MCF 10A (cell line): ENCODE measurements at regions of chr2 and their contacts with region 1.

Region 1: DNA sequence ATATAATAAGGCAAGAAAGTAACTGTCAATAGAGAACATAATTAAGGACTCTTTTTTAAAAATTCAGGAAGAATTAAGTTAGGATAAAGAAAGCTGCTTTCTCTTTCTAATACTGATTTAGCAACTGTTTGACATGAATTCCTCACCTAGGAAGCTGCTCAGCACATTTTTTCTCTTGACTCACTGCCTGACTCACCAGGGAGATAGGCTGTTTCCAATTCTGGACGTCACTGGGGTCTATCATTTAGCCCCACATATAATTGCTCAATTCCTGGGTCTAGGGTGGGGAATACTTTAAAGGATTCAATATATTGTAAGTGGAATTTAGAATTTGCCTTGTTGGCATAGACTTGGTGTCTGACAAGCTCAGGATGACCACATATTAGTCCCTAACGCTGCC is 50.8 kb upstream of the UGP2 start:
- DNase-seq: peak; percentile 78
- H3K4me3 Mint-ChIP-seq: peak overlapping the region; percentile 51
- H3K27ac Mint-ChIP-seq: peak overlapping the region; percentile 83
- H3K4me1 Mint-ChIP-seq: peaks cover 35% of the 10 kb centered on the region
- H3K27me3 Mint-ChIP-seq: no peaks in the 10 kb centered on the region
- CTCF ChIP-seq: no peak

Region 2: GRCh38 chr2:63736354-63736753 is 54.6 kb before region 1 on chr2:
- CTCF ChIA-PET with region 1: interaction called, 5 read pairs
- POLR2A ChIA-PET with region 1: interaction called, 149 read pairs
- intact Hi-C with region 1: no loop called
- DNase-seq: no peak
- H3K4me3 Mint-ChIP-seq: no peak overlapping the region
- H3K27ac Mint-ChIP-seq: peak overlapping the region; percentile 37
- H3K4me1 Mint-ChIP-seq: peaks cover 50% of the 10 kb centered on the region
- H3K27me3 Mint-ChIP-seq: no peaks in the 10 kb centered on the region
- CTCF ChIP-seq: no peak